ENCODE measurements at regions of chr3 and their contacts with region 1.

Region 1: GRCh38 chr3:139455855-139456254 is 20.5 kb downstream of the RBP2 start:
- DNase-seq: no peak
- H3K4me3 ChIP-seq: no peak overlapping the region
- H3K27ac ChIP-seq: no peak overlapping the region
- H3K4me1 ChIP-seq: peaks cover 16 to 25% (median 20%) of the 10 kb centered on the region in 4 experiments
- H3K27me3 ChIP-seq: no peaks in the 10 kb centered on the region
- CTCF ChIP-seq: peak in 2 of 3 experiments; percentile 34 to 45; a peak in 2 of 4 replicates
- EP300 ChIP-seq: no peak
- POLR2A ChIP-seq: no peak
- RAD21 ChIP-seq: peak; percentile 45 to 52

Region 2: DNA sequence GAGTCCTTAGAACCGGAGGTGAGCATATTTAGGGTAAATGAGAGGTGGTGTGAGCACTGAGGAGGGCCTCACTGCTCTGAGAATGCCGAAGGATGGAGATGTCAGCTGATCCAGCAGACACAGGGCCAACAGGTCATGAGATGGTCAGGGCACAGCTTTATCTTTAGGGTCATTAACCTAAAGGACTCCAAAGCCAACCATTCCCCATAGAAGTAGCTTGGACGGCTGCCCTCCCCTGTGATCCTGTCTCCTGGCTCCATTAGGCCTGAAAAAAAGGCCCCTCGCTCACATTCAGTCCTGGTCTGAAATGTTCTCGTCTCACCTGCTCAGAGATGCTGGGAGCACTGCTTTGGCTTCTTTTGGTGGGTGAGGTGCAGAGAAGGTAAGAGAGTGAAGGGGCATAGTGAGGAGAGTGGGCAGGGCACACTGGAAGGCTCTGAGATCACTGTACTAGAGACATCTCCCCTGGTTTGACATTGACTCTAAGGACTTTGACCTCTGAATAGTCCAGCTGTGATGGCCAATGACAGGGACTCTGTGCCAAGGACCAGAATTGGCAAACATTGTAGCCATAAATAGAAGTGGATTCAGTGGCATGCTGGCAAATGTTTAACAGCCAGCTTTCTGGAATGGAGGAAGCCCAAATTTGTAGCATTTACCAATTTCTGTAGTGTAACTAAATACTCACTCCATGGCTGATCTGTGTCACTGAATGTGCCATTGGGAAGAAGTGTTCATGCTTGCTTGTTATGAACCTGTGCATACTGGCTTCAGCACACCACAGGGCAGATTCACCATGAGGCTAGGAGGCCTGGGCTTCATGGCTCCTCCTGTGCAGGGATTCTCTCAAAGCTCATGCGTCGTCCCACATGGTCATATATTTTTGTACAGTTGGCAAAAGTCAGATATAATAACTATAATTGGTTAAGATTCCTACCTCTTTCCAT is 188.3 kb before region 1 on chr3:
- CTCF ChIA-PET with region 1: no interaction called
- POLR2A ChIA-PET with region 1: no interaction called
- DNase-seq: peak in 1 of 2 experiments; percentile 6
- H3K4me3 ChIP-seq: no peak overlapping the region
- H3K27ac ChIP-seq: no peak overlapping the region
- H3K4me1 ChIP-seq: no peaks in the 10 kb centered on the region
- H3K27me3 ChIP-seq: peaks cover 0 to 2% (median 0%) of the 10 kb centered on the region in 4 experiments; a peak in 1 of 7 replicates
- CTCF ChIP-seq: no peak
- EP300 ChIP-seq: no peak
- POLR2A ChIP-seq: no peak
- RAD21 ChIP-seq: no peak

Region 3: DNA sequence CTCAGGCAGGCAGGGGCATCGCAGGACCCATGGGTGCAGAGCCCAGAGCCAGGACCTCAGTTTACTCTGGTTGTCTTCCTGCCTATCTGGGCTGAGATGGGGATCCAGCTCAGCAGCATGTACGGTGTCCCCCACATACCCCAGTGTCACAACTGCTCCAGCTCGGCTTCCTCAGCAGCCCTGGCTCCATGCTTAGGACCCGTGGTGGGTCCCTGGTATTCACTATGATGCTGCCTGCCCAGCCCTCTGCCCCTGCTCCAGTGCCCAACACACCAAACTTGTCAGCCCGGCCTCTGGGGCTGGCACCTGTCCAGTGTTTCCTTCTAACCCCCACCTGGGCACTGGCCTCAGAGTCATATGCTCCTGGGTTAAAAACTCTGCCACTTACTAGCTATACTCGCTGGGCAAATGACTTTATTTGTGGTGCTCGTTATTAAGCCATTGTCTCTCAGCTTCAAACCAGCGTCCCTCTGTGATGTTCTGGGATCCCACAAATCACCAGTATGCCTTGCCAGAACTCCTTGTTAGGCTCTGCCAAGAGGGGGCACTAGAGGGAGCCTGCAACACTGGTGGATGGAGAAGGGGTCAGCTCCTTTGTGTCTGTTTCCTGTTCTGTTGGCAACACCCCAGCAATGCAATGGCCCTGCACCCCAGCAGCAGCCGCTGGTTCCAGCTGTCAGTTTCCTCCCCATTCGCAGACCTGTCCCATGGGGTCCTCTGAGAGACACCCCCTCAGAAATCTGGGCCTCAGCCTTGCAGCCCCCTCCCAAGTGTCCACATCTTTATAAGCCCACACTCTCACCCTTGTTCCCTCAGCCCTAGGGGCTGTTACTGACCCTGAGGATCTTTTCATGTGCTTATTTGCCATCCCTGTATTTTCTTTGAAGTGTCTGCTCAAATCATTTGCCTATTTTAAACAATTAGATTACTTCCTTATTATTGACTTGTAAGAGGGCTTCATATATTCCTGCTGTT is 136.1 kb before region 1 on chr3:
- CTCF ChIA-PET with region 1: no interaction called
- POLR2A ChIA-PET with region 1: no interaction called
- DNase-seq: peak; percentile 36 to 85
- H3K4me3 ChIP-seq: no peak overlapping the region
- H3K27ac ChIP-seq: no peak overlapping the region
- H3K4me1 ChIP-seq: peaks cover 0 to 2% (median 0%) of the 10 kb centered on the region in 4 experiments; a peak in 2 of 7 replicates
- H3K27me3 ChIP-seq: no peaks in the 10 kb centered on the region
- CTCF ChIP-seq: peak; percentile 77 to 95 (median 79)
- EP300 ChIP-seq: no peak
- POLR2A ChIP-seq: no peak
- RAD21 ChIP-seq: peak; percentile 47 to 66; a peak in 3 of 4 replicates

Region 4: GRCh38 chr3:139389458-139390209 is 66.2 kb before region 1 on chr3 and contains the start of gene COPB2:
- CTCF ChIA-PET with region 1: no interaction called
- POLR2A ChIA-PET with region 1: no interaction called
- DNase-seq: peak; percentile 96 to 100
- H3K4me3 ChIP-seq: peak within 1 kb of the TSS; percentile 87 to 98 (median 92)
- H3K27ac ChIP-seq: peak within 1 kb of the TSS; percentile 95
- H3K4me1 ChIP-seq: no peaks in the 10 kb centered on the region
- H3K27me3 ChIP-seq: no peaks in the 10 kb centered on the region
- CTCF ChIP-seq: no peak
- EP300 ChIP-seq: no peak
- POLR2A ChIP-seq: peak; percentile 64 to 89; a peak in 2 of 3 replicates
- RAD21 ChIP-seq: no peak
- total RNA-seq, gene COPB2: 111 and 119 TPM in 2 replicates

Region 5: GRCh38 chr3:139434764-139435307 is 21.0 kb before region 1 on chr3:
- CTCF ChIA-PET with region 1: interaction called, 33 read pairs
- POLR2A ChIA-PET with region 1: no interaction called
- DNase-seq: no peak
- H3K4me3 ChIP-seq: no peak overlapping the region
- H3K27ac ChIP-seq: no peak overlapping the region
- H3K4me1 ChIP-seq: peaks cover 0 to 3% (median 0%) of the 10 kb centered on the region in 4 experiments; a peak in 1 of 7 replicates
- H3K27me3 ChIP-seq: no peaks in the 10 kb centered on the region
- CTCF ChIP-seq: peak in 2 of 3 experiments; percentile 16 to 37; a peak in 2 of 4 replicates
- EP300 ChIP-seq: no peak
- POLR2A ChIP-seq: no peak
- RAD21 ChIP-seq: peak; percentile 24 to 37; a peak in 2 of 4 replicates

Region 6: DNA sequence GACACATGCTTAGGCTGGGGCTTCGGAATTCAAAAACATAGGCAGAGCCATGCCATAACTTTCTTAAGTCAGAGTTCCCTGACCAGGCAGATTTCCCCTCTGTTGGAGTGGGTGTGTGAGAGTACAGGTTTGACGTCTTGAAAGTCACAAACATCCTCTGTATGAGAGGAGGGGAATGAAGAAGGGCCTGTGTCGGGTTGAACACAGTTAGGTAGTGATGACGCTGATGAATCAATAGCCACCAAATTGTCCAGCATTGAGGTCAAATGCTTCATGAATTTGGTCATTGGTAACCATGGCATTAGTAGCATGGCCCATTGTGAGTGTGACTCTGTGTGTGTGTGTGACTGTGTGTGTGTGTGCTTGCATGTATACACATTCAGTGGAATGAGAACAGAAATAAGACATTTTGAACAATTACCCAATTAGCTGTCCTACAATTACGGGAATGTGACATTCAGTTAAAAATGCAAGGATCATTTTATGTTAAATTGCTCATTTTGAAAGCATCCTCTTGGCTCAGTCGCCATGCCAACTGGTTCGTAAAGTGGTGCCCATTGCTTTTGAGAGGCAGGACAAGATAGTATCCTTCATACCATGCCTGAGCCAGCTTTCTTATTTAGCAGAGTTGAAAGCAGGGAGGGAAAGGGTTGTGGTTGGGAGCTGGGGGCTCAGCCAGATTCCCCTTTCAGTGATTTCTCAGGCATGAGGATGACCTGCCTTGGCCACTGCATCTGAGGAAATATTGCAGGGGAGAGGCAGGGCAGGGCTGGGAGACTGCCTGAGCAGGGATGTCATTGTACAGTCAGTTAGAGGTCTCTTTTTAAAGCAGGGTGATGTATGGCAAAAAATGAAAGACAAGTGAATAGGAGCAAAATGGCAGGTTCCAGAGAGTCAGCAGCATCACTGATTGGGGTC is 15.0 kb before region 1 on chr3:
- CTCF ChIA-PET with region 1: interaction called, 33 read pairs
- POLR2A ChIA-PET with region 1: interaction called, 3 read pairs
- DNase-seq: no peak
- H3K4me3 ChIP-seq: no peak overlapping the region
- H3K27ac ChIP-seq: no peak overlapping the region
- H3K4me1 ChIP-seq: no peaks in the 10 kb centered on the region
- H3K27me3 ChIP-seq: no peaks in the 10 kb centered on the region
- CTCF ChIP-seq: no peak
- EP300 ChIP-seq: no peak
- POLR2A ChIP-seq: no peak
- RAD21 ChIP-seq: no peak

Region 7: GRCh38 chr3:139468399-139468798 is 12.5 kb after region 1 on chr3:
- CTCF ChIA-PET with region 1: interaction called, 34 read pairs
- POLR2A ChIA-PET with region 1: no interaction called
- DNase-seq: no peak
- H3K4me3 ChIP-seq: no peak overlapping the region
- H3K27ac ChIP-seq: no peak overlapping the region
- H3K4me1 ChIP-seq: no peaks in the 10 kb centered on the region
- H3K27me3 ChIP-seq: no peaks in the 10 kb centered on the region
- CTCF ChIP-seq: no peak
- EP300 ChIP-seq: no peak
- POLR2A ChIP-seq: no peak
- RAD21 ChIP-seq: no peak

Region 8: GRCh38 chr3:139541156-139541897 is 85.5 kb after region 1 on chr3:
- CTCF ChIA-PET with region 1: interaction called, 11 read pairs
- POLR2A ChIA-PET with region 1: interaction called, 3 read pairs
- DNase-seq: no peak
- H3K4me3 ChIP-seq: peak overlapping the region in 1 of 4 experiments; percentile 69; a peak in 1 of 8 replicates
- H3K27ac ChIP-seq: no peak overlapping the region
- H3K4me1 ChIP-seq: peaks cover 4 to 23% (median 13%) of the 10 kb centered on the region in 4 experiments; a peak in 6 of 7 replicates
- H3K27me3 ChIP-seq: peaks cover 0 to 24% (median 19%) of the 10 kb centered on the region in 4 experiments; a peak in 4 of 7 replicates
- CTCF ChIP-seq: no peak
- EP300 ChIP-seq: no peak
- POLR2A ChIP-seq: no peak
- RAD21 ChIP-seq: no peak

Region 9: DNA sequence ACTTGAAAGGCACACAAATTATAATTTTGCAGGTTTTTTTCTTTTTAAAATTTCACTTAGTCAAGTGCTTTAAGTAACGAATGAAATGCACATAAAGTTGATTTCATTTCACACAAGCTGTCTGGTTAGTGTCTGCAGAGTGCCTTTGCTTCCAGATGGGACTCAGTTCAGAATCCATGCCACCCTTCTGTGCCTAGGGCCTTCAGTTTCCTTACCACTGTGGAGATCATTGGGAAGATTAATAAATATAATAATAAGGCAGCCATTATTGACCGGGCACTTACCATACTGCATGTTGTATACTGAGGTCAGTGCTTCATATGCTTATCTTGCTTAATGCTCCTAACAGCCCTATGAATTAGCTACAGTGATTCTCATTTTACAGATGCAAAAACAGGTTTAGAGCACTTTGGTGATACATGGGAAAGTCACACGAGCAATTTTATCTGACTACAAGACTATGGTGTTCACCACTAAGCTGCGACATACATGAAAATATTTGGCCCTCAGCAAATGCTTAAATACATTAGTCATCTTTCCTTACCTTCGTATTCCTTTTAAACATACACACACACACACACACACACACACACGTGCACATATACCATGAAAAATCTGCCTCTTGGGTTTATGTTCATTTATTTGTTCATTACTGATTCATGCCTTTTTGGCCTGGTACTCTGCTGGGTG is 218.9 kb after region 1 on chr3:
- CTCF ChIA-PET with region 1: no interaction called
- POLR2A ChIA-PET with region 1: no interaction called
- DNase-seq: no peak
- H3K4me3 ChIP-seq: 0 out of 8 replicates have a peak overlapping the region, but pooled peaks of 1 of the 4 experiments have one; percentile 12
- H3K27ac ChIP-seq: no peak overlapping the region
- H3K4me1 ChIP-seq: peaks cover 0 to 19% (median 12%) of the 10 kb centered on the region in 4 experiments; a peak in 3 of 7 replicates
- H3K27me3 ChIP-seq: peaks cover 9 to 32% (median 21%) of the 10 kb centered on the region in 4 experiments
- CTCF ChIP-seq: no peak
- EP300 ChIP-seq: no peak
- POLR2A ChIP-seq: no peak
- RAD21 ChIP-seq: no peak

Measured in H1 (cell line).